ENCODE measurements at regions of chr13 and their contacts with region 1.

Region 1: DNA sequence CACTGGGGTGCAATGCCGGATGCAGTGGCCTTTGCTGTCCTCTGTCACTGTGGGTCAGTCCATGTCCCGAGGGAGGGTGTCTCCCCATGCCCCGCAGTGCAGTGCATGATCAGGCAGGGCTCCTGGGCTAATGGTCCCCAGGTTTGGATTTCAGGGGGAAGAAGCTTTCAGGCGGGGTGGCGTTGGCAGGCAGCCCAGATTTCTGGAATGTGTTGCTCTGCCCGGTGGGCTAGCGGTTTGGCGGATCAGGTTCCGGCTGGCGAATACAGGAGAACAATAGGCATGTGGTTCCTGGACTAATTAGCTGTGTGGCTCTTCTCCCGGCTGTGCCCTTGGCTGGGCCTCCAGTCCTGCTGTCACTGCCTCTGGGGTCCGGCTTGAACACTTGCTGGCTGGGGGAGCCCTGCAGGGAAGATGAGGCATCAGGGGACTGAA is 141.3 kb downstream of the FGF9 start:
- DNase-seq: no peak
- H3K4me3 ChIP-seq: no peak overlapping the region
- H3K27ac ChIP-seq: no peak overlapping the region
- H3K4me1 ChIP-seq: no peaks in the 10 kb centered on the region
- H3K27me3 ChIP-seq: no peaks in the 10 kb centered on the region
- CTCF ChIP-seq: no peak

Region 2: GRCh38 chr13:21872795-21873194 is 60.6 kb after region 1 on chr13:
- intact Hi-C with region 1: loop called (anchors 2 kb)
- DNase-seq: no peak
- H3K4me3 ChIP-seq: no peak overlapping the region
- H3K27ac ChIP-seq: no peak overlapping the region
- H3K4me1 ChIP-seq: no peaks in the 10 kb centered on the region
- H3K27me3 ChIP-seq: no peaks in the 10 kb centered on the region
- CTCF ChIP-seq: no peak

Measured in ascending aorta (tissue), 2 donors.